ENCODE measurements at regions of chr14 and their contacts with region 1.

Region 1: GRCh38 chr14:59483900-59484638 is at the starts of genes JKAMP and L3HYPDH:
- DNase-seq: peak; percentile 95 to 99 (median 97)
- ATAC-seq: peak; percentile 95
- H3K4me3 ChIP-seq: peak within 1 kb of the TSS; percentile 99
- H3K4me3 Mint-ChIP-seq: peak within 1 kb of the TSS; percentile 99
- H3K27ac ChIP-seq: peak within 1 kb of the TSS; percentile 62 to 63
- H3K27ac Mint-ChIP-seq: peak within 1 kb of the TSS; percentile 96
- H3K4me1 ChIP-seq: peaks cover 39% of the 10 kb centered on the region
- H3K4me1 Mint-ChIP-seq: peaks cover 73% of the 10 kb centered on the region
- H3K27me3 ChIP-seq: no peaks in the 10 kb centered on the region
- H3K27me3 Mint-ChIP-seq: no peaks in the 10 kb centered on the region
- CTCF ChIP-seq: peak; percentile 28
- total RNA-seq, gene JKAMP: 9.4 to 9.8 TPM
- total RNA-seq, gene L3HYPDH: 10.6 to 11.1 TPM

Region 2: GRCh38 chr14:59189786-59190771 is 294.0 kb before region 1 on chr14:
- CTCF ChIA-PET with region 1: interaction called, 7 read pairs
- POLR2A ChIA-PET with region 1: interaction called, 16 read pairs
- intact Hi-C with region 1: loop called (anchors 5 to 10 kb)
- DNase-seq: peak; percentile 28 to 91 (median 56)
- ATAC-seq: no peak
- H3K4me3 ChIP-seq: peak overlapping the region; percentile 83
- H3K4me3 Mint-ChIP-seq: peak overlapping the region; percentile 99
- H3K27ac ChIP-seq: peak overlapping the region; percentile 84 to 87
- H3K27ac Mint-ChIP-seq: peak overlapping the region; percentile 94
- H3K4me1 ChIP-seq: peaks cover 20% of the 10 kb centered on the region
- H3K4me1 Mint-ChIP-seq: peaks cover 29% of the 10 kb centered on the region
- H3K27me3 ChIP-seq: no peaks in the 10 kb centered on the region
- H3K27me3 Mint-ChIP-seq: no peaks in the 10 kb centered on the region
- CTCF ChIP-seq: no peak

Region 3: DNA sequence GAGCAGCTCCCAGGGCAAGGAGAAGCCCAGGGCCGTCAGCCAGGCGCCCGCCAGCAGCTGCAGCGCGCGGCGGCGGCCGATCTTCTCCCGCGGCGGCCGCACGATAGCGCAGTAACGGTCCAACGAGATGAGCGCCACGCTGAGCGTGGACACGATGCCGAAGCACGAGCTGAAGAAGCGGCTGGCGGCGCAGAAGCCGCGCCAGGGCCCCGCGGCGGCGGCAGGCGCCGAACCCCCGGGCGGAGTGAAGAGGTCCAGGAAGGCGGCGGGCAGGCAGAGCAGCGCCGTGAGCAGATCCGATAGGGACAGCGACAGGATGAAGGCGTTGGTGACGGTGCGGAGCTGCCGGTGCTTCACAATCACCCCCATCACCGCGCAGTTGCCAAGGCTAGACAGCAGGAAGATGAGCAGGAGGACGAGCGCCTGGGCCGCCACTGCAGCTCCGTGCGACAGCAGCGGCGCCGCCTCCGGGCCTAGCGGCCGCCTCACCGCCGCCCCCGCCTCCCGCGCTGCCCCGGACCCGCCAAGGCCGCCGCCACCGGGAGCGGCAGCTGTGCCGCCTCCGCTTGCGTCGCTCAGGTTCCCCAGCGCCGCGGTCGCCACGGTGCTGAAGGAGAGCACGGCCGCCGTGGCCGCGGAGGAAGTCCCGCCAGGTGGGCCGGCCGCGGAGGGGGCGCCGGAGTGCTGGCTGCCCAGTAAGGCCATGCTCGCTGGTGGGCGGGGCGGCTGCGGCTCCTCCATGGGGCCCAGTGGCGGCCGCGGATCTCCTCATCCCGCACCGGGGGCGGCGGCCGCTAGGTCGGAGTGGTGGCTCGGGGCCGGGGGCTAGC is 19.4 kb before region 1 on chr14:
- CTCF ChIA-PET with region 1: interaction called, 6 read pairs
- POLR2A ChIA-PET with region 1: interaction called, 42 read pairs
- intact Hi-C with region 1: loop called (anchors 2 kb)
- DNase-seq: peak; percentile 19 to 85 (median 50)
- ATAC-seq: peak; percentile 76
- H3K4me3 ChIP-seq: peak overlapping the region; percentile 56
- H3K4me3 Mint-ChIP-seq: peak overlapping the region; percentile 94
- H3K27ac ChIP-seq: no peak overlapping the region
- H3K27ac Mint-ChIP-seq: peak overlapping the region; percentile 54
- H3K4me1 ChIP-seq: peaks cover 15% of the 10 kb centered on the region
- H3K4me1 Mint-ChIP-seq: peaks cover 8% of the 10 kb centered on the region
- H3K27me3 ChIP-seq: no peaks in the 10 kb centered on the region
- H3K27me3 Mint-ChIP-seq: peaks cover 10% of the 10 kb centered on the region
- CTCF ChIP-seq: no peak

Region 4: DNA sequence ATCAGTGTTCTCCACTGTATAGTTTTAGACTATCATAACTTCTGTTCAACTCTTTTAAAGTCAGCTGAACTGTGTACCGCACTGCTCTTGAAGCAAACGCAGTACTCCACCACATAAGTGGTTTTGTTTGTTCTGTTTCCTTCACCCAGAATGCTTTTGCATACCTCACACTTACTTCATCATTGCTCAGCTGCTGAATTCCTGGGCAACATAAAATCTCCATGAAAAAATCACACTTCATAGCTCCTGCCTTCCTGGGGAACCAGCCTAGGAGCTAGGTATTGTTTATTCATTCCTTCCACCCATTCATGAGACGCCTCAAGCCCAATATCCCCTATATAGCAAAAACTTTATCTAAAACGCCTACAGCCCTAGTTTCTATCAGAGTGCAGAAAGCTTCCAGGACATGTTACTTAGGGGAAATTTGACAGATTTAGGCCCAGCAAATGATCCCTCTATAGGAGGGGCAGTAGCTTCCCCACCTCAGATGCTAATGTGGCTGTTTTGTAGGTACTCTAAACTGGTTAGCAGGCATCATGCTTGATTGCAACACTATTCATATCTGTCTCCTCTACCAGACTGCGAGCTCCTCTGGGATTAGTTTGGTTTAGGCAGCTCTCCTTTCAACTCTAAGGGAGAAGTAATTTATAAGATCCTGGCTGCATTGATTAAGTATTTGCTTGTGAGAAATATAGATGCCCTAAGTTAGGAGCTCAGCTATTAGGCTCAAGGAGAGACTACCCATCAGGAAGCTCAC is 480.4 kb after region 1 on chr14:
- CTCF ChIA-PET with region 1: interaction called, 5 read pairs
- POLR2A ChIA-PET with region 1: interaction called, 4 read pairs
- intact Hi-C with region 1: loop called in 1 of 2 experiments (anchors 5 kb)
- DNase-seq: peak in 2 of 14 experiments; percentile 13 to 18
- ATAC-seq: peak; percentile 10
- H3K4me3 ChIP-seq: peak overlapping the region; percentile 64
- H3K4me3 Mint-ChIP-seq: peak overlapping the region; percentile 94
- H3K27ac ChIP-seq: no peak overlapping the region
- H3K27ac Mint-ChIP-seq: peak overlapping the region; percentile 96
- H3K4me1 ChIP-seq: peaks cover 9% of the 10 kb centered on the region
- H3K4me1 Mint-ChIP-seq: peaks cover 22% of the 10 kb centered on the region
- H3K27me3 ChIP-seq: no peaks in the 10 kb centered on the region
- H3K27me3 Mint-ChIP-seq: no peaks in the 10 kb centered on the region
- CTCF ChIP-seq: no peak

Region 5: GRCh38 chr14:60980811-60981632 is 1497.0 kb after region 1 on chr14 and contains the starts of genes SLC38A6 and TRMT5:
- CTCF ChIA-PET with region 1: no interaction called
- POLR2A ChIA-PET with region 1: no interaction called
- intact Hi-C with region 1: loop called in 1 of 2 experiments (anchors 10 kb)
- DNase-seq: peak; percentile 80 to 95 (median 87)
- ATAC-seq: peak; percentile 88
- H3K4me3 ChIP-seq: peak within 1 kb of the TSS; percentile 75
- H3K4me3 Mint-ChIP-seq: no peak within 1 kb of the TSS
- H3K27ac ChIP-seq: peak within 1 kb of the TSS; percentile 79 to 83
- H3K27ac Mint-ChIP-seq: no peak within 1 kb of the TSS
- H3K4me1 ChIP-seq: peaks cover 17% of the 10 kb centered on the region
- H3K4me1 Mint-ChIP-seq: peaks cover 31% of the 10 kb centered on the region
- H3K27me3 ChIP-seq: no peaks in the 10 kb centered on the region
- H3K27me3 Mint-ChIP-seq: no peaks in the 10 kb centered on the region
- CTCF ChIP-seq: no peak
- total RNA-seq, gene SLC38A6: 9.4 to 10.0 TPM
- total RNA-seq, gene TRMT5: 3.6 to 3.8 TPM

Measured in CD4-positive, alpha-beta T cell (primary cell).